ENCODE measurements at regions of chr2 and their contacts with region 1.

Region 1: GRCh38 chr2:86393521-86394491 is 47.4 kb upstream of the KDM3A start:
- DNase-seq: peak; percentile 40
- ATAC-seq: peak; percentile 89 to 91

Region 2: GRCh38 chr2:86124683-86125082 is 269.1 kb before region 1 on chr2:
- intact Hi-C with region 1: no loop called
- DNase-seq: no peak
- ATAC-seq: no peak

Region 3: GRCh38 chr2:86201671-86202335 is 192.0 kb before region 1 on chr2:
- intact Hi-C with region 1: no loop called
- DNase-seq: no peak
- ATAC-seq: no peak

Region 4: DNA sequence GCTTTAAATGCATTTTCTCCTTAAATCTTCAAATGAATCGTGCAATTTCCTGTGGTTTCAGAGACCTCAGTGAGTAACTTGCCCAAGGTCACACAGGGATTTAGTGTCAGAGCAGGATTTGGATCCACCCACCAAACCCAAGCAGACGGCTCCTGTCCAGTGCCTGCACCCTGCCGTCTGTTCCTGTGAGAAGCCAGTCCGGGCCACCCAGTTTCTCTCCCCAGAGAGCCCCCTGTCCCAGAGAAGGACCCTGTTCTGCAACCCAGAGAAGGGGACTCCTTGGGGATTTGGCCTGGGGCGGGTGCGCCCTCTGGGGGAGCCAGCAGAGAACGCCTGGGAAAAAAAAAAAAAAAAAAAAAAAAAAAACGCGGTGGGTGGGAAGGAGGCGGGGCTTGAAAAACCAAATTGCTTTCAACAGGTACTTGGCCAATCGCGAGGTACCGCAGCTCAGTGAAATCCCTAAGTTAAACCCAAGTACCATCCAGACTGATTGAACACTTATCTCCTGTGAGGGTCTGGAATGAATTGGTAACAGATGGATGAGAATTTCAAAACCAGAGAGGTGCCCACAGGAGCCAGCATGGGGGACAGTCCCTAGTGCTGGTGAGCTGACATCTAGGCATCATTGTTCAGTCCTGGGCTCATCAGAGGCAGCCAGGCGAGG is 25.5 kb before region 1 on chr2:
- intact Hi-C with region 1: no loop called
- DNase-seq: peak; percentile 27
- ATAC-seq: peak; percentile 65 to 69

Region 5: GRCh38 chr2:86440631-86441391 is 47.0 kb after region 1 on chr2 and contains the start of gene KDM3A:
- intact Hi-C with region 1: loop called in 1 of 2 experiments (anchors 5 kb)
- DNase-seq: peak; percentile 99
- ATAC-seq: peak; percentile 95 to 96
- total RNA-seq, gene KDM3A: 35.5 to 45.9 TPM

Region 6: DNA sequence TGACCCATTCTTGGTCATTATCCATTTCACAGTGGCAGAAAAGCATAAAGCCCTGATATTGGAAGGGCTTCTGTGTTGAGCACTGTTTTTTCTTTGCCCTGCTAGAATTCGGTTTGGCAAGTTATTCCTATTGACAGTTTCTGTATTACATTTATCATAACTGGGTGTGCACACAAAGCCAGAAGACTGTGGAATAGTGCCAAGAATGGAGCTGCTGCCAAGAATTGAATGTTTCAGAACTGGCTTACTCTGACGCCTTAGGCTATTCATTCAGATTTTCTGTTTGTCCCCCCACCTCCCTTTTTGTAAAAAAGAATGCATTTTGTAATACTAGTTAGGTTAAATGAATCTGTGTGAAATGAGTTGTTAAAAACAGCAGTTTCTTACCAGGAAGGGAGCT is 60.0 kb after region 1 on chr2:
- intact Hi-C with region 1: no loop called
- DNase-seq: peak; percentile 57
- ATAC-seq: peak; percentile 82 to 89